Left colon (tissue), 2 donors: ENCODE measurements at regions of chr18 and their contacts with region 1.

Region 1: DNA sequence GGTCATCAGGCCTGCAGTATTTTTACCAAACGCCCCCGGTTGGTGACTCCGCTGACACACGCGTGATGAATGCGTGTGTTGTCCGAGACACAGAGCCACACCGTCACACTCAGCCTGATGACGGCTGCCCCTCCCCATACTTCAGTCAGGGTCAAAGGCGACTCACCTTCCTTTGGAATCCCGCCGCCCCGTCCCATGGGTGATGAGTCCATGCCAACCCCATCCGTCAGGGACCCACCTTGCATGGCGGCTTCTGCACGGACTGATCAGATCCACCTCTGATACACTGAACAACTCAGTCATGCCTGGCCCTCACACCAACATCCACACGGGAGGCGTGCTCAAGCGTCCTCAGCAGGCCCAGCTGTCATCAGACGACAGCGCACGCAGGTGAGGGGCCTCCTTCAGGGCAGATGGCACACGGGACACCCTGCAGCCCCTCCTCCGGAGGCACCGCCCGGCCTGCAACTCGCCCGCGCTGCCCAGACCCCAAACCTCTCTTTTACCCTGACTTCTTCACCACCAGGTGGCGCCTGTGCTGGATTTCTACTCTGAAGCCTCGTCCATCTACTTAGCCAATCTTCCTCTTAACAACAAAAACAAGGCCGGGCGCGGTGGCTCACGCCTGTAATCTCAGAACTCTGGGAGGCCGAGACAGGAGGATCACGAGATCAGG is 89.2 kb downstream of the ZNF516 start:
- DNase-seq: peak in 1 of 2 donors; percentile 66
- ATAC-seq: peak; percentile 64

Region 2: GRCh38 chr18:76697441-76697901 is 291.7 kb after region 1 on chr18:
- intact Hi-C with region 1: loop called in 1 of 2 experiments (anchors 10 kb)
- DNase-seq: no peak
- ATAC-seq: peak; percentile 89